Uterus (tissue), 4 donors: ENCODE measurements at regions of chr1 and their contacts with region 1.

Region 1: DNA sequence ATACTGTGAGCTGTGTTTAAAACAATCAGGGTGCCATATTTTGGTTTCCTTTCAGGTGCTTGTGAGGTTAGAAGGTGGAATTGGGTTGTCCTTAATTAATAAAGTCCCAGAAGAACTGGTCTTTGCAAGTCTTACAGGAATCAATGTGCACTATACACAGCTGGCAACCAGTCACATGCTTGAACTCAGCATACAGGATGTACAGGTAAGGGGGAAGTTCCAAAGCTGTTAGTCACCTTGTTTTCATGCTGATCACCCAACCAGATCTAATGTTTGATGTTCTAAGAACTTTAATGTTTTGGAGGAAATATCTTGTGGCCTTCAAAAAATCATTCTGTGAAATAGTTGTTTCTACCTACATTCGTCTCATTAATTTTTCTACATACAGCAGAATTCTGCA is 156.3 kb downstream of the VPS13D start:
- DNase-seq: no peak
- H3K4me3 ChIP-seq: no peak overlapping the region
- H3K27ac ChIP-seq: no peak overlapping the region
- H3K4me1 ChIP-seq: no peaks in the 10 kb centered on the region
- H3K27me3 ChIP-seq: no peaks in the 10 kb centered on the region
- CTCF ChIP-seq: no peak
- POLR2A ChIP-seq: no peak

Region 2: GRCh38 chr1:11985851-11986250 is 400.3 kb before region 1 on chr1:
- intact Hi-C with region 1: loop called (anchors 5 kb)
- DNase-seq: no peak
- H3K4me3 ChIP-seq: no peak overlapping the region
- H3K27ac ChIP-seq: no peak overlapping the region
- H3K4me1 ChIP-seq: peaks cover 0 to 7% of the 10 kb centered on the region in 2 donors
- H3K27me3 ChIP-seq: no peaks in the 10 kb centered on the region
- CTCF ChIP-seq: no peak
- POLR2A ChIP-seq: no peak